ENCODE measurements at regions of chr6 and their contacts with region 1.

Region 1: GRCh38 chr6:166942393-166943168 is 13.8 kb downstream of the RNASET2 start:
- DNase-seq: peak; percentile 90
- ATAC-seq: peak; percentile 92
- H3K4me3 Mint-ChIP-seq: peak overlapping the region; percentile 59
- H3K27ac Mint-ChIP-seq: peak overlapping the region; percentile 97
- H3K4me1 Mint-ChIP-seq: peaks cover 49% of the 10 kb centered on the region
- H3K27me3 Mint-ChIP-seq: no peaks in the 10 kb centered on the region

Region 2: GRCh38 chr6:166956444-166957086 is 14.0 kb after region 1 on chr6 and contains the start of gene RNASET2:
- CTCF ChIA-PET with region 1: interaction called, 18 read pairs
- POLR2A ChIA-PET with region 1: interaction called, 5 read pairs
- intact Hi-C with region 1: loop called (anchors 1 kb)
- DNase-seq: peak; percentile 100
- ATAC-seq: peak; percentile 80
- H3K4me3 Mint-ChIP-seq: peak within 1 kb of the TSS; percentile 94
- H3K27ac Mint-ChIP-seq: peak within 1 kb of the TSS; percentile 97
- H3K4me1 Mint-ChIP-seq: peaks cover 69% of the 10 kb centered on the region
- H3K27me3 Mint-ChIP-seq: no peaks in the 10 kb centered on the region
- total RNA-seq, gene RNASET2: 68.7 to 85.2 TPM

Measured in activated CD4-positive, alpha-beta T cell treated with anti-CD3 and anti-CD28 coated beads for 36 hours (primary cell).